Endothelial cell of umbilical vein (primary cell): ENCODE measurements at regions of chr4 and their contacts with region 1.

Region 1: DNA sequence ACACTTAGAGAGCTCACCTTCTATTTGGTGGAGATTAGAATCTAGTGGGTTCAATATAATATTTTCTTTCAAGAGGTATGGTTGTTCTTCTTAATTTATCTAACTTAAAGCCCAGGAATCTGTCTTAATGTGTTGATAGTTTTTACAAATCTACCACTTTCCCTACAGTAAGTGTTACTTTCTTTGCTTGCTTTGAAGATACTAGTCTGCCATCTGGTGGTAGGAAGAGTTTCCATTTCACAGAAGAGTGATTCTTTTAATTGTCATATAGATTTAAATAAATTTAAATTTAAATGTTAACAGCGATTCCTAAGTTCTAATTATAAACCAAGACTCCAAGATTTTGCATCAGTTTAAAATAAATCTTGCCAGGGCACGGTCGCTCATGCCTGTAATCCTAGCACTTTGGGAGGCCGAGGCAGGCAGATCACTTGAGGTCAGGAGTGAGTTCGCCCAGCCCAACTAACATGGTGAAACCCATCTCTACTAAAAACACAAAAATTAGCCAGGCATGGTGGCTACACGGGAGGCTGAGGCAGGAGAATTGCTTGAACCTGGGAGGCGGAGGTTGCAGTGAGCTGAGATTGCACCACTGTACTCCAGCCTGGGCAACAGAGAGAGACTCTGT is 43.5 kb downstream of the NUDT9 start:
- DNase-seq: peak; percentile 53
- H3K4me3 ChIP-seq: no peak overlapping the region
- H3K27ac ChIP-seq: no peak overlapping the region
- H3K4me1 ChIP-seq: no peaks in the 10 kb centered on the region
- H3K27me3 ChIP-seq: no peaks in the 10 kb centered on the region
- CTCF ChIP-seq: peak; percentile 18 to 30
- POLR2A ChIP-seq: no peak

Region 2: GRCh38 chr4:87270144-87270543 is 195.7 kb before region 1 on chr4:
- CTCF ChIA-PET with region 1: interaction called, 4 read pairs
- POLR2A ChIA-PET with region 1: no interaction called
- dilution Hi-C with region 1: no loop called
- intact Hi-C with region 1: loop called (anchors 2 kb)
- DNase-seq: peak; percentile 31
- H3K4me3 ChIP-seq: no peak overlapping the region
- H3K27ac ChIP-seq: no peak overlapping the region
- H3K4me1 ChIP-seq: no peaks in the 10 kb centered on the region
- H3K27me3 ChIP-seq: peaks cover 7 to 12% of the 10 kb centered on the region in 2 experiments
- CTCF ChIP-seq: peak; percentile 8 to 32
- POLR2A ChIP-seq: no peak

Region 3: DNA sequence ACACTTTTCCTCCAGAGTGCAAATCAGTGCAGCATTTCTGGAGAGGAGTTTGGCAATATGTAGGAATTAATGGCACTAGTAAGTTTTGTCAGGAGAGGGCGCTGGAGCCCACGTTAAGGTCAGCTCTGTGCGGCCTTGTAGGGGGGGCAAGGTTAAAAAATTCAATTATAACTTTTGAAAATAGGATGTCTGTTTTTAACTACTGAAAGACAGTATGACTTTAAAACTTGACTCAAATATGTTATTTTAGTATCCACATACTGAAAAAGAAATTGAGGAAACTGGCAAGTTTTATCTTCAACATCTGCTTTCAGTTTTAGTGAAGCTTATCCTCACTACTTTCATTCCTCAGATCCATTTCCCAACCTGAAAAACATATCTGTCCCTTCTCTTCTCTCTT is 112.3 kb before region 1 on chr4:
- CTCF ChIA-PET with region 1: interaction called, 87 read pairs
- POLR2A ChIA-PET with region 1: no interaction called
- dilution Hi-C with region 1: no loop called
- intact Hi-C with region 1: loop called (anchors 5 kb)
- DNase-seq: peak; percentile 67
- H3K4me3 ChIP-seq: no peak overlapping the region
- H3K27ac ChIP-seq: no peak overlapping the region
- H3K4me1 ChIP-seq: no peaks in the 10 kb centered on the region
- H3K27me3 ChIP-seq: no peaks in the 10 kb centered on the region
- CTCF ChIP-seq: peak; percentile 57
- POLR2A ChIP-seq: no peak

Region 4: DNA sequence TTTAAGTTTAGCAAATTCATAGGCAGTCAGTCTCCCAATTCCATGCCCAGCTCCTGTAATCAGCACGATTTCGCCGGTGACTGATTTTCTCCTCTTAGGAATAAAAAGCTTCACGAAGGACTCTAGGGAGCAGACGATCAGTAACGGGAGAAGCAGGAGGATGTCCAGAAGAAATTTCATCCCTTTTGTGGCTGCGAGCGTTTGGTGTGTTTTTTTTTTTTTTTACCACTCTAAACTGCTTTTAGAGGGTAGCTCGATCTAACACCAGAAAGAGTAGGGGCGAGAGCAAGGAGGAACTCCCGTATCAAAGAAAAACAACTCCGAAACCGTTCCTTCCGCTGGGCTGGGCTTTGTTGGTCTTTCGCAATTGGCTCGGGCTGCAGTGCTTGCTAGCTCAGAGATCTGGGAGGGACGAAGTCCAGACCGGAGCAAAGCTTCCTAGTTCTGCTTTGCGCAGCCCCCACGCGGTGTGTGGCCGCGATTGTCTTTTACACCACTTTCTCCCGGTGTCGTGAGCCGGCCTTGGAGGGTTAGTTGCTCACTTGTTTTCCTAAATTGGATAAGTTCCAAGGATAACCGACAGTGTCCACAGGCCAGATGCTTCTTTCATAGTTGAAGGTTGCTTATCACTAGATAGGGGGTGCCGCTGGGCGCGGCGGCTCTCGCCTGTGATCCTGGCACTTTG is 74.8 kb before region 1 on chr4 and contains the start of gene HSD17B11:
- CTCF ChIA-PET with region 1: interaction called, 12 read pairs
- POLR2A ChIA-PET with region 1: no interaction called
- dilution Hi-C with region 1: no loop called
- intact Hi-C with region 1: no loop called
- DNase-seq: peak; percentile 93
- H3K4me3 ChIP-seq: peak within 1 kb of the TSS; percentile 62 to 85 (median 65)
- H3K27ac ChIP-seq: peak within 1 kb of the TSS; percentile 47
- H3K4me1 ChIP-seq: peaks cover 9% of the 10 kb centered on the region
- H3K27me3 ChIP-seq: no peaks in the 10 kb centered on the region
- CTCF ChIP-seq: no peak
- POLR2A ChIP-seq: peak; percentile 85
- total RNA-seq, gene HSD17B11: 16.0 and 21.1 TPM in 2 replicates

Region 5: GRCh38 chr4:87848622-87849351 is 382.9 kb after region 1 on chr4:
- CTCF ChIA-PET with region 1: no interaction called
- POLR2A ChIA-PET with region 1: no interaction called
- dilution Hi-C with region 1: no loop called
- intact Hi-C with region 1: no loop called
- DNase-seq: peak; percentile 55
- H3K4me3 ChIP-seq: no peak overlapping the region
- H3K27ac ChIP-seq: no peak overlapping the region
- H3K4me1 ChIP-seq: peaks cover 6% of the 10 kb centered on the region
- H3K27me3 ChIP-seq: no peaks in the 10 kb centered on the region
- CTCF ChIP-seq: peak; percentile 49 to 66
- POLR2A ChIP-seq: no peak